OCI-LY7 (cell line): ENCODE measurements at regions of chr18 and their contacts with region 1.

Region 1: DNA sequence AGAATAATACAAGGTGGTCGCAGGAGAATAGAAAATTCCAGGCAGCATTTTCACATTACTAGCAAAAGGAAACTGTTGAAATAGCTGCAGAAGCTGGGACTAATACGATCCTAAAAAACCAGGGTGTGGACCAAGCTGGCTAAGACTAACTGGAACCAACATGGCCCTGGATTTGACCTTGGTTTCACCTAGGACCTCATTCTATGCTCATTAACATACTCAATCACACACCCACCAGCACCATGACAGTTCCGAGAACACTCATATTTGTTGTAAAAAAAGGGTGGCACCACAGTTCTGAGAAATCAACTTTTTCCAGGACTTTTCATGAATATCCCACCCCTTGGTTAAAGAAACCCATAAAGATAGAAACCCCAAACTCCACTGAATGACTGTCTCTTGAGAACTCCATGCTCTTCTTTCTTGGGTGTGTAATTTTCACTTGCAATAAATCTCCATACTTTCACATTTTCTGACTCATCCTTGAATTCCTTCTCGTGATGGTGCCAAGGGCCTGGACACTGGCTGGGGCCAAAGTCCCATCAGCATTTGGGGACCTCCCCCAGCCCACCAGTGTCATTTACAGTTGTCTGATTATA is 164.3 kb upstream of the CHST9 start:
- DNase-seq: no peak
- H3K4me3 ChIP-seq: no peak overlapping the region
- H3K27ac ChIP-seq: no peak overlapping the region
- H3K4me1 ChIP-seq: no peaks in the 10 kb centered on the region
- CTCF ChIP-seq: no peak

Region 2: DNA sequence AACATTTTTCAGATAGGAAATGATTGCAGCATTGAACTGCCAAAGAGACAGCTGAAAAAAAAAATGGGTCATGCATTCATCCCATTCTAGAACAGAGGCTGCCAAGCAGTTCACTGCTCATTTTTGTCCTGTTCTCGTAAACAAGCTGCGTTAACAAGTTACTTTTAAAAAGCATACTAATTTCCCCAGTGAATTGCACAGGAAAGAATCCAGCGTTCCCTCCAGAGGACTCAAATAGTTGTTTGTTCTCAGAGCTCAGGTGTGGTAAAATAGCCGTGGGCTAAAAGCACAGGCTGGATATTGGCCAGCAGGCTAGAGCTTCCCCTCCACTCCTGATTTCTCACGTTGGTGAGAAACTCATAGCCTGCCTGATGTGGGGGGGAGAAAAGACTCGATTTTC is 407.8 kb before region 1 on chr18:
- CTCF ChIA-PET with region 1: no interaction called
- POLR2A ChIA-PET with region 1: no interaction called
- intact Hi-C with region 1: no loop called
- DNase-seq: no peak
- H3K4me3 ChIP-seq: no peak overlapping the region
- H3K27ac ChIP-seq: no peak overlapping the region
- H3K4me1 ChIP-seq: no peaks in the 10 kb centered on the region
- CTCF ChIP-seq: no peak

Region 3: GRCh38 chr18:27017901-27018500 is 331.4 kb before region 1 on chr18:
- CTCF ChIA-PET with region 1: no interaction called
- POLR2A ChIA-PET with region 1: no interaction called
- intact Hi-C with region 1: no loop called
- DNase-seq: peak; percentile 13
- H3K4me3 ChIP-seq: no peak overlapping the region
- H3K27ac ChIP-seq: no peak overlapping the region
- H3K4me1 ChIP-seq: no peaks in the 10 kb centered on the region
- CTCF ChIP-seq: peak; percentile 82

Region 4: DNA sequence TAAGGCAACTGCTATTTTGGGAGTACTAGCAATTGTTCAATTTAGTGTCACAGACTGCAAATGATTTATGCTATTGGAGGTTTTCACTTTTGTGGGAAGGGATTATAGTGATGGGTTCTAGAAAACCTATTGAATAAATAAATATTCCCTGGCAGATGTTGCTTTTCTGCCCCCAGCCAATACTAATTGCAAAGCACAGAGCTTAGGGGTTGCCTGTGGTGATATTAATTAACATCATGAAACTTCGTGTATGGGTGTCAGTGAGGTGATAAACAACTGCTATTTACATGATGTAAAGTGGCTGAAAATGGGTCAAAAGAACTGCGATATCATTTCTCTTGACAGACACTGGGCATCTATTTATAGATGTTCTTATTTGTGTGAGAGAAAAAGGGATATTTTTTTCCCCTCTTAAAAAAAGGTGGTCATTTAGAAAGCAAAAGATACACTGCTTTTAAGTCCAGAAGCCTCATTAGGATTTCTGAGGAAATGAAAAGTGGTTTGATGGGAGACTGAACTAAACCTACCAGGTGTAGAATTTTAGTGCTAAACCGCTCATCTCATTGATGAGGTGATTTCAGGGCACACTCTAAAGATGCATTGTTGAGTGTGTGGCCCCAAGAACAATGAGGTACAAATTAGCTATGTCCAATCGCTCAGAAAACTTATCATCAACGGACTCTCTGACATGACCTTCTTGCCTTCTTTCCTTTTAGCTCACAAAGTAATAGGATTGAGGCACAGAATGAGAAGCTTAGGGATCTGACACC is 47.6 kb before region 1 on chr18:
- CTCF ChIA-PET with region 1: no interaction called
- POLR2A ChIA-PET with region 1: no interaction called
- intact Hi-C with region 1: no loop called
- DNase-seq: no peak
- H3K4me3 ChIP-seq: no peak overlapping the region
- H3K27ac ChIP-seq: no peak overlapping the region
- H3K4me1 ChIP-seq: no peaks in the 10 kb centered on the region
- CTCF ChIP-seq: no peak

Region 5: DNA sequence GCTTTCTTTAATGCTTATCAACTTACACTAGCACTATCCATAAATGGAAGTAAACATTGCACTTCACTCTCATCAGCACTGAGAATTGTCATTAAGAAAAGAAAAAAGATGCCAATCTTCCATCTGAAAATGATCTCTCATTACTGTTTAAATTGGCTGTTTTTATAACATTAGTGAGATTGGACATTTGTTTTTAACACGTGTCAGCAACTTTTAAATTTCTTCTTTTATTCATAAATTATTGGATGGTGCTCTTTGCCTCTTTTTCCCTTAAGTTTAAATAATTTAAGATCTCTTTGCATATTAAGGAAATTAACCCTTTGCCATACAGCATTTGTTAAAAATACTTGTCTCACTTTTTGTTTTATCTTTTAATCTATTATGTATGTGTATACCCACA is 17.8 kb before region 1 on chr18:
- CTCF ChIA-PET with region 1: no interaction called
- POLR2A ChIA-PET with region 1: interaction called, 10 read pairs
- intact Hi-C with region 1: no loop called
- DNase-seq: no peak
- H3K4me3 ChIP-seq: no peak overlapping the region
- H3K27ac ChIP-seq: no peak overlapping the region
- H3K4me1 ChIP-seq: no peaks in the 10 kb centered on the region
- CTCF ChIP-seq: no peak